ENCODE measurements at regions of chr11 and their contacts with region 1.

Region 1: GRCh38 chr11:65497141-65498041 is 1.5 kb upstream of the MALAT1 start:
- DNase-seq: peak; percentile 98
- H3K4me3 ChIP-seq: peak overlapping the region; percentile 97
- H3K27ac ChIP-seq: peak overlapping the region; percentile 98
- H3K27me3 ChIP-seq: no peaks in the 10 kb centered on the region
- CTCF ChIP-seq: no peak

Region 2: DNA sequence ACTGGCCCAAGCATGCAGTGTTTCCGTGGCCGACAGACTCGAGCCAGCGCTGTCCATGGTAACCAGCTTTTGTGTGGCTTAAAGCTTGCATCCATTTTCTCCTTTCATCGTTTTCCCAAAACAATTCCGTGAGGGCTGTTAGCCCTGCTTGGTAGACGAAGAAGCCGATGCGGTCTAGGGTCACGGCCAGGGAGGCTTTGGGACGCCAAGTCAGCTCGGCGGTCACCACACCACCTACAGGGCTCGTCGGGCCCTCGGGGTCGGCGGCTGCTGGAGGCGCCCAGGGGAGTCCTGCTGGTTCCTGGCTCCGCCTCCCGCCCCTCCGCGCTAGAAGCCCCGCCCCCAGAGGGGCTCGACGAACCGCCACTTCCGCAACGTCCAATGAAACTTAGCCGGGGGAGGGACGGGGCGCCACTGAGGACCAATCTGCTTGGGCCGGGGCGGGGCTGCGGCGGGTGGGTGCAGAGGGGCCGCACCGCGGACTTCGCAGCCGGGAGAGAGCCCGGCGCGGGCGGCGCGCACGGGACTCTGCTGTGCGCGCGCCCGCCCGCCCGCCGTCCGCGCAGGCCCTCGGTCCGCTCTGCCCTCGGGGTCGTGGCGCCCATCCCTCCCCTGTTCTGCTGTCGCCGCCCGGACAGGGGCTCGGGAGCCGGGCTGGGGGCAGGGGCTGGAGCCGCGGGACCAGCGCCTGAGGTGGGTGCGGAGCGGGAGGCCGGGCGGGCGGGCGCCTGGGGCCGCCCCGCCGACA is 143.0 kb before region 1 on chr11 and contains the start of gene TIGD3:
- CTCF ChIA-PET with region 1: no interaction called
- POLR2A ChIA-PET with region 1: no interaction called
- DNase-seq: peak; percentile 73
- H3K4me3 ChIP-seq: peak within 1 kb of the TSS; percentile 70
- H3K27ac ChIP-seq: peak within 1 kb of the TSS; percentile 65
- H3K27me3 ChIP-seq: peaks cover 24% of the 10 kb centered on the region
- CTCF ChIP-seq: no peak
- polyA plus RNA-seq, gene TIGD3: 0.07 and 0.11 TPM in 2 replicates

Region 3: DNA sequence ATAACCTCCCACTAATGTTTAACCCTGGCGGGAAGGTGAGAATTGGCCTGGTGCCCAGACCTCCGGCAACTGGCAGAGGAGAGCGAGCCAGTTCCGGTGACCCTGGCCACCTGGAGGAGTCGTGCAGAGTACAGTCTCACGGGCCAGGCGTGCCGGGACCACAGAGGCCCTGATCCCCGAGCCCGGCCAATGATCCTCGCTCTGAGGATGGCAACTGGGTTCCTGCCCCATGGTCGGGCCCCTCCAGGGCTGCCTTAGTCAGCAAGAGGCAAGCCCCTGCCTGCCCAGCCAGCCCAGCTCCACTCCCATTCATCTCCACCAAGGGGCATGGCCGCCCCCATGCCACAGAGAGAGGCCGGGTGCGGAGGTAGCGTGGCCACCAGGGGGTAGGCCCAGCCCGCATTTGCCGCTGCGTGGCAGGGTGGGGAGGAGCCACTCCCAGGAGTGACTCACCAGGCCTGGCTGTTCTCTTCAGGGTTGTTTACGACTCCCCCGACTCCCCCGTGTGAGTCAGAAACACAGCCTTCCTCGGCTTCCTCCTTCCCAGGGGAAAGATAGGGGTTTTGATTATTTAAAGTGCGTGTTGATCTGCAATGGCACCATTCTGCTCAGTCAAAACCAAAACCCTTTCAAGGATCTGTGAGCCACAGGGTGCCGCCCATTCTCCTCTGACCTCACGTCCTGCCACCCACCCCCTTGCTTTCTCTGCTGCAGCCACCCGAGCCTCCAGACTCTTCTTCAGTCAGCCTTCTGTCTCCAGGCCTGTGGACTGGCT is 115.2 kb before region 1 on chr11 and contains the start of gene SLC25A45:
- CTCF ChIA-PET with region 1: interaction called, 4 read pairs
- POLR2A ChIA-PET with region 1: interaction called, 15 read pairs
- DNase-seq: peak; percentile 97
- H3K4me3 ChIP-seq: peak within 1 kb of the TSS; percentile 54
- H3K27ac ChIP-seq: peak within 1 kb of the TSS; percentile 99
- H3K27me3 ChIP-seq: no peaks in the 10 kb centered on the region
- CTCF ChIP-seq: peak; percentile 77
- polyA plus RNA-seq, gene SLC25A45: 0.76 and 1.4 TPM in 2 replicates

Region 4: GRCh38 chr11:65440831-65441499 is 56.4 kb before region 1 on chr11:
- CTCF ChIA-PET with region 1: no interaction called
- POLR2A ChIA-PET with region 1: interaction called, 322 read pairs
- DNase-seq: no peak
- H3K4me3 ChIP-seq: no peak overlapping the region
- H3K27ac ChIP-seq: no peak overlapping the region
- H3K27me3 ChIP-seq: no peaks in the 10 kb centered on the region
- CTCF ChIP-seq: no peak

Region 5: DNA sequence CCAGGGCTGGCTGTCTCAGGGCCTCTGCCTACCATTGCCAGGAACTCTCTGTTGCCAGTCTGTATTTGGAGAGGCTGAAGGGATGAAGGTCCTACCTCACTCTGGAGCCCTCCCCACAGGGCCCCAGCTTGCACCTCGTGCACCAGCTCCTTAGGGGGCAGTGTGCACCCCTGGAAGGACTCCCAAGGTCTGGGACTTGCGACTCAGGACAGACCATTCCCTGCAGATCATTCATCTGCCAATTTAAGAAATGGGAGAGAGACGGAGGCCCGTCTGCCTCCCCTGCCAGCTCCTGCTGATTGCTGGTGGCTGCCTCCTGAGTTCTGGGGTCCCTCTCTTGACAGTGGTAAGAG is 26.0 kb before region 1 on chr11:
- CTCF ChIA-PET with region 1: interaction called, 7 read pairs
- POLR2A ChIA-PET with region 1: interaction called, 657 read pairs
- DNase-seq: no peak
- H3K4me3 ChIP-seq: peak overlapping the region; percentile 31
- H3K27ac ChIP-seq: peak overlapping the region; percentile 97
- H3K27me3 ChIP-seq: no peaks in the 10 kb centered on the region
- CTCF ChIP-seq: peak; percentile 56

Region 6: GRCh38 chr11:66080055-66080817 is 582.8 kb after region 1 on chr11:
- CTCF ChIA-PET with region 1: no interaction called
- POLR2A ChIA-PET with region 1: no interaction called
- DNase-seq: no peak
- H3K4me3 ChIP-seq: no peak overlapping the region
- H3K27ac ChIP-seq: no peak overlapping the region
- H3K27me3 ChIP-seq: no peaks in the 10 kb centered on the region
- CTCF ChIP-seq: no peak

Region 7: GRCh38 chr11:66317723-66318599 is 820.6 kb after region 1 on chr11:
- CTCF ChIA-PET with region 1: no interaction called
- POLR2A ChIA-PET with region 1: interaction called, 14 read pairs
- DNase-seq: peak; percentile 74
- H3K4me3 ChIP-seq: no peak overlapping the region; the same call in 1 of the 2 replicates
- H3K27ac ChIP-seq: peak overlapping the region; percentile 99
- H3K27me3 ChIP-seq: no peaks in the 10 kb centered on the region
- CTCF ChIP-seq: no peak

Measured in AG04450 (cell line).